Cardiac septum (tissue), 1 donor: ENCODE measurements at regions of chr3 and their contacts with region 1.

Region 1: GRCh38 chr3:16768959-16769358 is 115.8 kb upstream of the PLCL2 start:
- DNase-seq: no peak

Region 2: DNA sequence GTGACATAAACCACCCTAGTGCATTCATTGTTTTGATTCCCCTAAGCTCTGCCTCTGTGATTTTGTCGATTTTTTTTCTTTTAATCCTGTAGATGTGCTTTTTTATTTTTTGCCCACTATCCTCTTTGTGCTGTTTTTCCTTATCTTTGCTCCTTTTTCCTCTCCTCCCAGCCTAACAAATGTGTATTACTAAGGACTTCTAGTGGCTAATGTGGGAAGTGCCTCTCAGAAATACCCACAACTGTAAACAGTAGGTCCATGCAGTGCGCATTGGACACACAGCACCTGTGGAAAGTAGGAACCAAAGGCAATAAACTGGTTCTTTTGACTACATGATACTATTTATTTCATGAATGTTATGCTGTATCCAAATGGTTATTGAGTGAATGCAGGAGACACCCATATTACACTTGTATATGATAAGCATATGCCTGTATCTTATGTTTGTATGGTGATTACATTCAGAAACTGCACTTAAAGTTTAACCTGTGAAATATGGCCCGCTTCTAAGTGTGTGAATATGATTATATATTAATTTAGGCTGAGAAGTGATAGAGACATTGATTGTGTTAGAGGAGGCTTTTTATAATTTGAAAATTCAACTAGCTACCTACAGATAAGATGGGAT is 263.6 kb after region 1 on chr3:
- intact Hi-C with region 1: loop called (anchors 10 kb)
- DNase-seq: no peak

Region 3: GRCh38 chr3:17290894-17291293 is 521.9 kb after region 1 on chr3:
- intact Hi-C with region 1: no loop called
- DNase-seq: no peak